ENCODE measurements at regions of chr6 and their contacts with region 1.

Region 1: DNA sequence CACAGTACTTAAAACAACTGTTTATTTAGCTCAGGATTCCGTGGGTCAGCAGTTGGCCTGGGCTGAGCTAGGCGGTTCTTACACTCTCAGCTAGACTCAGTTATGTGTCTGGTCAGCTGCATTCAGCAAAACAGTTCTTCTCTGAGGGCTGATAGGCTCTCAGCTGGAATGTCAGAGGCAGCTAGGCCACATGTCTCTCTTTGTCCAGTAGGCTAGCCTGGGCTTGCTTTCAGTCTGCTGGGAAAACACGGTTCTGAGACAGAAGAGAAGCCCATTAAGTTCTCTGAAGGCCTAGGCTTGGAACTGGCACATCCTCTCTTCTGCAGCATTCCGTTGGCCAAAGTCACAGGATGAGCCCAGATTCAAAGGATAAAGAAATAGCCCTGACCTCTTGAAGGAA is 65.6 kb downstream of the TULP4 start:
- DNase-seq: no peak
- ATAC-seq: no peak

Region 2: GRCh38 chr6:158060455-158061360 is 317.2 kb before region 1 on chr6:
- intact Hi-C with region 1: no loop called
- DNase-seq: peak; percentile 89
- ATAC-seq: peak; percentile 79

Region 3: GRCh38 chr6:158441716-158442215 is 63.9 kb after region 1 on chr6:
- intact Hi-C with region 1: loop called (anchors 10 kb)
- DNase-seq: no peak
- ATAC-seq: peak; percentile 90

Measured in Right ventricle myocardium inferior (tissue), 1 donor.